ENCODE measurements at regions of chr3 and their contacts with region 1.

Region 1: DNA sequence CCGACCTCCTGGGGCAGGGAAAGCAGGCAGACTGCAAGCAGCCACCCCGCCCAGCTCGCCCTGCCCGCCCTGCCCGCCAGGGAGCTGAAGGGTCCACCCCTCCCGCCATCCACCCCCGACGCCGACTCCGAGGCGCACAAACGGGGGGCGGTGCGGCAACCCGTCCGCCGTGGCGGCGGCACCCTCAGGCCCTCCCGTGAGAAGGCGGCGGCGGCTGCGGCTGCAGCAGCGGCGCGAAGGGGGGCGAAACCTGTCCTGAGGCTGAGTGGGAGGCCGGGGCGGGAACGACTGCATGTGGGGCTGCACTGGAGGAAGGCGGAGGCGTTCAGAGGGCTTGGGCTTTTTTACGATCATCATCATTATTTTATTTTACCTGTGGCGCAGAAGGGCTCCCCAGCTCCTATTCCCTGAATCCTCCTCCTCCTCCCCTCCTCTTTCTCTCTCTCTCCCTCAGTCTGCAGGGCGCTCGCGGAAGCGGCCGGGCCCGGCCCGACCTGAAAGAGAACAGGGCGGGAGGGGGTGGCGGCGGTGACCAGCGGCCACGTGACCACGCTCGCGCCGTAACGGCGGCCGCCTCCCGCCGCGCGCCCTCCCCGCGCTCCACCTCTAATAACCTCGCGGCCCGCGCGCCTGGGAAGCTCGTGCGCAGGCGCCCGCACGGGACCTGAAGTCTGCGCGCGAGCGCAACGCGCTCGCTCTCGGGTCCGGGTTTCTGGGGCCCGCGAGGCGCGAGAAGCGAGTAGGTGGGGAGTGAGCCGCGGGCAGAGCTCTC is at the start of gene TBC1D5:
- DNase-seq: peak; percentile 91
- ATAC-seq: peak; percentile 83
- H3K4me3 Mint-ChIP-seq: peak within 1 kb of the TSS; percentile 96
- H3K27ac Mint-ChIP-seq: peak within 1 kb of the TSS; percentile 97
- H3K4me1 Mint-ChIP-seq: peaks cover 57% of the 10 kb centered on the region
- H3K27me3 Mint-ChIP-seq: no peaks in the 10 kb centered on the region
- CTCF ChIP-seq: no peak
- total RNA-seq, gene TBC1D5: 102 and 106 TPM in 2 replicates

Region 2: DNA sequence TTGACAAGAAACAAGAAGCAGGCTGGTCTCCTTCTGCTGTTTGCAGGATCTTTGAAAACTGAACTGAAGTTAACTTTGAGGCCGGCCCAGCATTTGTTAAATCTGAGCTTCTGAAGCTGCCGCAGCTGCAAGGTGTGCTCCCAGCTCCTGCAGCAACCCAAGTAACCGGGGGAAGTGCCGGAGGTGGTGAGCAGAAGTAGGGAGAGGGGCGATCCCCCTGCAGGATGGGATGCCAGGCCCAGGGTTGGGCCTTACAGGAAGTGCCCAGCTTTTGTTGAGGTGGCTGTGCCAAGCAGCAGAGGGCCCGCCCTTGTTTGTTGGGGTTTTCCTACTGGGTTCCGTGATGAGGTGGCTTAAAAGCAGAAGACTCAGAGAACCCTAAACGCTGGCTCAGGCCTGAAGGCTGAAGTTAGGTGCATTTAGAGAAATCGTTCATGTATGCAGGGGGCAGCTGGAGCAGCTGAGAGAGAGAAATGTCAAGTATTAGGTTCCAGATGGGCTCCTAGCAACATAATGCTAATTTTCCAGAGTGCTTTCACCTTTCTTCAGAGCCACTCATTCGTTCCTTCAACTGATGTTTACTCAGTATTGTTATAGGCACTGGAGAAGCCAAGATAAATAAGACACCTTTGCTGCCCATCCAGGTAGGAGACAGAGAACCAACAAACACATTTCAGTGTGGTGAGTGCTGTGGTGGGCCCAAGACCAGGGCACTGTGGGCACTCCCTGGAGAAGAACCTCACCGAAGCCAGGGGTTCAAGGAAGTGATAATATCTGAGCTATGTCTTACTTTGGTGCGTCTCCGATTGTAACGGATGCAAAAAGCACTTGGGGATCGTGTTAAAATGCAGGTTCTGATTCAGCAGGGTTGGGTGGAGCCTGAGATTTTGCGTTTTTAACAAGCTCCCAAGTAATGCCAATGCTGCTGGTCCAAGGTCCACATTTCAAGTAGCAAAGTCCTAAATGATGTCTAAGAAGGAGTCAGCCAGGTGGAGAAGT is 899.7 kb before region 1 on chr3:
- CTCF ChIA-PET with region 1: no interaction called
- POLR2A ChIA-PET with region 1: interaction called, 4 read pairs
- intact Hi-C with region 1: loop called (anchors 5 kb)
- DNase-seq: peak; percentile 66
- ATAC-seq: peak; percentile 92
- H3K4me3 Mint-ChIP-seq: peak overlapping the region; percentile 75
- H3K27ac Mint-ChIP-seq: peak overlapping the region; percentile 98
- H3K4me1 Mint-ChIP-seq: peaks cover 67% of the 10 kb centered on the region
- H3K27me3 Mint-ChIP-seq: no peaks in the 10 kb centered on the region
- CTCF ChIP-seq: no peak

Region 3: DNA sequence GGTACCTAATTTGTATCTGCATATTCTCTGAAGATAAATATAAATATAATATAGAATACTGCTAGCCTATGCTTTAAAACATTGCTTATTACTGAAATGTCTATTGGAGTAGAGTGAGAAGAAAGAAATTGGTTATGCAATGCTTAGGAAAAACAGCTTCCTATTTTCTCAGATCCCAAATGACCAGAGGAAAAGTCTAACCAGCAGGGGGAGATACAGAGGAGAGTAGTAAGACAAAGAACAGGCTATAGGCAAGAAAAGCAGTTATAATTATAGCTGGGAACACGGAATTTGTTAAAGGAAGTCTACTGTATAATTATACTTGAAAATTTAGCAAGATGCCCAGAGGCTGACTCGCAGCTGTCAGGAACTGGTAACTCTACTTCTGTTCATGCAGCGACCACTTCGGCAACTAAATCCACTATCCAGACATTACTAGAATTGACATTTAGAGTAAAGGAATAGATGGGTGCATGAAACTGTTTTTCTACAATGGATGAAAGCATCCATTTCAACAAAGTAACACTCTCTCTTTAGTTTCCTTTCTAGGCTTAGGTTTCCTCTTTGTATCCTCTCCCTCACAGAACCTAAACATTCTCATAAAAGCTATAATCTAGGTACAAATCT is 97.1 kb before region 1 on chr3:
- CTCF ChIA-PET with region 1: interaction called, 5 read pairs
- POLR2A ChIA-PET with region 1: no interaction called
- intact Hi-C with region 1: loop called (anchors 1 kb)
- DNase-seq: no peak
- ATAC-seq: no peak
- H3K4me3 Mint-ChIP-seq: no peak overlapping the region
- H3K27ac Mint-ChIP-seq: no peak overlapping the region
- H3K4me1 Mint-ChIP-seq: peaks cover 9% of the 10 kb centered on the region
- H3K27me3 Mint-ChIP-seq: no peaks in the 10 kb centered on the region
- CTCF ChIP-seq: peak; percentile 35

Region 4: GRCh38 chr3:17730318-17730967 is 11.9 kb before region 1 on chr3:
- CTCF ChIA-PET with region 1: no interaction called
- POLR2A ChIA-PET with region 1: interaction called, 8 read pairs
- intact Hi-C with region 1: loop called (anchors 1 kb)
- DNase-seq: no peak
- ATAC-seq: no peak
- H3K4me3 Mint-ChIP-seq: no peak overlapping the region
- H3K27ac Mint-ChIP-seq: no peak overlapping the region
- H3K4me1 Mint-ChIP-seq: peaks cover 33% of the 10 kb centered on the region
- H3K27me3 Mint-ChIP-seq: no peaks in the 10 kb centered on the region
- CTCF ChIP-seq: no peak

Region 5: GRCh38 chr3:17765819-17766472 is 23.7 kb after region 1 on chr3:
- CTCF ChIA-PET with region 1: no interaction called
- POLR2A ChIA-PET with region 1: interaction called, 8 read pairs
- intact Hi-C with region 1: loop called (anchors 1 kb)
- DNase-seq: no peak
- ATAC-seq: peak; percentile 93
- H3K4me3 Mint-ChIP-seq: peak overlapping the region; percentile 53
- H3K27ac Mint-ChIP-seq: peak overlapping the region; percentile 83
- H3K4me1 Mint-ChIP-seq: peaks cover 22% of the 10 kb centered on the region
- H3K27me3 Mint-ChIP-seq: no peaks in the 10 kb centered on the region
- CTCF ChIP-seq: no peak

Region 6: DNA sequence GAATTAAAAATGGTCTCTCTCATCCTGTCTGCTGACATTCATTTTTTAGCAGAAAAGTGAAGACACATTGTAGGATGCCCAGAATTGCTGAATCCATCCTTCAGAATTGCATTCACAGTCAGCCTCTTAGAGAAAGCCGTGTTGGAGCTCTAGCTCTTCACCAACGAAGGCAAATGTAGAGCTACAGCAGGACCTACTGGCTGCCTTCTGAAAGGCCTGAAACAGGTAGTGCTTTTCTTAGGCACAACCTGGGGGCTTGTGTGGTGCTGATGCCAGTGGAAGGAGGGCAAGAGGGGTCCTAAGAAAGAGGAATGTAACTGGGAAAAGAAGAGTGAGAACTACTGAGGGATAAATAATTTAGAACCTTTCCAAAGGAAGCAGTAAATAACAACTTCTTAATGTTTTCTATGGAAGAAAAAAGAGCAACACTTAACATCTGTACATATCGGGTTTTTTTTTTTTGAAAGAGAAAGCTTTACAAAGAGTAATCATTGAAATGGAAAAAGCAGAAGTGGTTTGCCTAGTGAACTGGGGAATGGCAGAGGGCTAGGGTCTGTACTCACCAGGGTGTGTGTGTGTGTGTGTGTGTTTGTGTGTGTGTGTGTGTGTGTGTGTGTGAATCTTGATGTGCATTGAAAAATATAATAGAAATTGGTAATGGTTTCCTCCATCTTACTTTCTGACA is 385.0 kb after region 1 on chr3:
- CTCF ChIA-PET with region 1: no interaction called
- POLR2A ChIA-PET with region 1: no interaction called
- intact Hi-C with region 1: loop called (anchors 5 kb)
- DNase-seq: peak; percentile 25
- ATAC-seq: peak; percentile 95
- H3K4me3 Mint-ChIP-seq: peak overlapping the region; percentile 51
- H3K27ac Mint-ChIP-seq: peak overlapping the region; percentile 67
- H3K4me1 Mint-ChIP-seq: peaks cover 30% of the 10 kb centered on the region
- H3K27me3 Mint-ChIP-seq: no peaks in the 10 kb centered on the region
- CTCF ChIP-seq: no peak

Region 7: GRCh38 chr3:18424729-18425640 is 682.7 kb after region 1 on chr3 and contains the start of gene SATB1:
- CTCF ChIA-PET with region 1: no interaction called
- POLR2A ChIA-PET with region 1: no interaction called
- intact Hi-C with region 1: loop called (anchors 5 kb)
- DNase-seq: peak; percentile 68
- ATAC-seq: peak; percentile 49
- H3K4me3 Mint-ChIP-seq: peak within 1 kb of the TSS; percentile 91
- H3K27ac Mint-ChIP-seq: peak within 1 kb of the TSS; percentile 87
- H3K4me1 Mint-ChIP-seq: peaks cover 40% of the 10 kb centered on the region
- H3K27me3 Mint-ChIP-seq: no peaks in the 10 kb centered on the region
- CTCF ChIP-seq: no peak
- total RNA-seq, gene SATB1: 23.0 and 30.8 TPM in 2 replicates

Measured in activated B cell treated with CpG ODN at 0.5 μM for 24 hours (primary cell).